Right lobe of liver (tissue), 6 donors: ENCODE measurements at regions of chr12 and their contacts with region 1.

Region 1: GRCh38 chr12:52561880-52562449 is 9.0 kb upstream of the KRT71 start:
- DNase-seq: no peak
- ATAC-seq: peak; percentile 54 to 86 (median 66)
- H3K4me3 ChIP-seq: no peak overlapping the region
- H3K27ac ChIP-seq: no peak overlapping the region
- H3K4me1 ChIP-seq: no peaks in the 10 kb centered on the region
- H3K27me3 ChIP-seq: no peaks in the 10 kb centered on the region
- CTCF ChIP-seq: peak; percentile 22 to 46 (median 38)
- POLR2A ChIP-seq: no peak

Region 2: DNA sequence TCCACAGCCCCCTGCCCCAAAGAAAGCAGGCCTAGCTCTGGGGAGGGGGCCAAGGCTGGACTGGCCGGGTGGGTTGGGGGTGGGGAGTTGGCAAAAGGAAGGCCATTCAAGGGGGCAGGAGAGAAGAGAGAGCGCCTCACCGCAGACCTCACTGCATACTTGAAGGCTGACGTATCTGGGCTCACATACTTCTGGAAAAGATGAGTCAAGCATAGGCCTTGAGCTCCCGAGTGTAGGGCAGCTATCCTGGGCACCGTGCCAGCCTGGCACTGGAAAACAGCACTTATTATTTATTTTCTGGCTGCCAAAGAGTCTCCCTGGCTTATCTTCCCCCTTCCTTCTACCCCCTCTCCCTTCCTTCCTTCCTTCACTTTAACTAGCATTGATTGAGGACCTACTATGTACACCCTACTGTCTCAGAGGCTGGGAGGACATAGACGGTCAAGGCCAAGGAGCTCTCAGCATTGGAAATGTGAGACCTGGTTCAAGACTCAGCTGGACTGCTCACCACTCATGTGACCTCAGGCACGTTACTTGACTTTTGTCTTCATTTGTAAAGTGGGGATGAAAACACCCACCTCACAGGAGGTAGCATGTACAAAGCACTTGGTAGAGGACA is 369.7 kb before region 1 on chr12:
- intact Hi-C with region 1: no loop called
- DNase-seq: peak; percentile 82 to 91 (median 90)
- ATAC-seq: peak; percentile 76 to 95 (median 86)
- H3K4me3 ChIP-seq: no peak overlapping the region
- H3K27ac ChIP-seq: peak overlapping the region in 1 of 3 donors; percentile 1
- H3K4me1 ChIP-seq: no peaks in the 10 kb centered on the region
- H3K27me3 ChIP-seq: no peaks in the 10 kb centered on the region
- CTCF ChIP-seq: no peak
- POLR2A ChIP-seq: no peak

Region 3: DNA sequence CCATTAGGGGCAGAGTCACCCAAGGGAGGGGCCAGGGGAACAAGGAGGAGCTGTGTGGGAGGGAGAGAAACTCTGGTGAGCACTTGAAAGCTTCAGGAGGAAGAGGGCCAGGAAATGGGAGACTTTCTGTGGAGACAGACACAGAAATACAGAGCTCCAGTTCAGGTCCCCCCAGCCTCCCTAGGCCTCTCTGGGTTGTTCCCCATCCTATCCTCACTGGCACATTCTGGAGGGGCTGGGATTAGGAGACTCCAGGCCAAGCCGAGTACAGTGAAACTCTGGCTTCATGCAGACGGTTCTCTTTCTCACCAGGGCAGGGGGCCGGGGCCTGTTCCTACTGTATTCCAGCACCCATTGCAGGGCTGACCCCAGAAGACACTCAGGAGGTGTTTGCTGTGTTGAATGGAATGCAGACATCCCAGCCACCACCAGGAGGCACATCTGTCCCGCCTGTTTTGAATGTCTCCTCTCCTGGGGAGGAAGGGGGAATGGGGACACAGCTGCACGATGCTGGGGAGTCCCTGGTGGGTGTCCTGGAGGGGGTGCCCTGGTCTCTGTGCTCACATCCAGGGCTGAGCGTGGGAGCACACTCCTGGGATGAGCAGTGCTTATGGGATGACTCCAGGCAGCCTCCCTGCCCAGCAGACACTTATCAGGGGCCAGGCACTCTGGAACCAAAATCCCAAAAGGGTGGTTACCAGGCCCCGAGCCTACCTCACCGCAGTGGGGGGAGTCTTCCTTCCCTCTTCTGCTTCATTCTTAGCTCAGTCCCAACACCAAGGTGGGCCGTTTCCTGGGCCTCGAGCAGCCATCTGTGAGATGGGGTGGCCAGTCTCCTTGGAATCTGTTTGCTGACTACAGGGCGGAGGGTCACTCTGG is 171.0 kb before region 1 on chr12:
- intact Hi-C with region 1: loop called in 1 of 2 experiments (anchors 10 kb)
- DNase-seq: no peak
- ATAC-seq: peak; percentile 22 to 41 (median 34)
- H3K4me3 ChIP-seq: no peak overlapping the region
- H3K27ac ChIP-seq: no peak overlapping the region
- H3K4me1 ChIP-seq: no peaks in the 10 kb centered on the region
- H3K27me3 ChIP-seq: no peaks in the 10 kb centered on the region
- CTCF ChIP-seq: peak; percentile 27 to 49 (median 36)
- POLR2A ChIP-seq: no peak